Head of caudate nucleus (tissue), 42 donors: ENCODE measurements at regions of chr19 and their contacts with region 1.

Region 1: GRCh38 chr19:46668662-46669061 is 7.7 kb upstream of the DACT3 start:
- DNase-seq: no peak

Region 2: GRCh38 chr19:46181388-46181779 is 487.3 kb before region 1 on chr19:
- intact Hi-C with region 1: no loop called
- DNase-seq: no peak

Region 3: DNA sequence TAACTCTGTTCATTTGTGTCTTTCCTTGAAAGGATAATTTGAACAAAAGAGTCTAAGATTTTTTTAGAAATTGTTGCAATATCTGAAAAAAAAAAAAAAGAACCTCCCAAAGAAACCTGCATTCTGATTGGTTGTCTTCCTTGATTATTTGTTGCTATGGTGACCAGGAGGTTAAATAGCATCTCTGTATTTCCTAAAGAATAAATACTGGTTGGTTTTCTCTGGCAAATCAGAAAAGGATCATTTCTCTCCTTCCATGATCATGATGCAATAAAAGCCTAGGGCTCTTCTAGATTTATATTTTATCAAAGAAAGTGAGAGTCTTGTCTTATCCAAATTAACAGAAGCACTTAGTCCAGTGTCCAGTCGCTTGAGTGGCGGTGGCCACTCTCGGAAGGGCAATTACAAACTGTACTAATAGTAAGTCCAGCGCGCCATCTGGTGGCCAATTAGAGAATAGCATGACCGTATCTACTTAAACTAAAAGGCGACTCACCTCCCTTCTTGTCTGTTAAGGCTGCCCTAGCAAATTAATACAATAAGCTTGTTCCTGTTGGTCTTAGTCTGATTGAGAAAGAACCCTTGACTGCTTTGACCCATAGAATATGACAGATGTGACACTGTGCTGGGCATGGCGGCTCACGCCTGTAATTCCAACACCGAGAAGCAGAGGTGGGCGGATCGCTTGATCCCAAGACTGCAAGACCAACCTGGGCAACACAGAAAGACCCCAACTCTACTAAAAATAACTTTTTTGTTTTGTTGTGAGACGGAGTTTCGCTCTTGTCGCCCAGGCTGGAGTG is 126.0 kb before region 1 on chr19:
- intact Hi-C with region 1: no loop called
- DNase-seq: peak; percentile 75 to 99 (median 92)

Region 4: DNA sequence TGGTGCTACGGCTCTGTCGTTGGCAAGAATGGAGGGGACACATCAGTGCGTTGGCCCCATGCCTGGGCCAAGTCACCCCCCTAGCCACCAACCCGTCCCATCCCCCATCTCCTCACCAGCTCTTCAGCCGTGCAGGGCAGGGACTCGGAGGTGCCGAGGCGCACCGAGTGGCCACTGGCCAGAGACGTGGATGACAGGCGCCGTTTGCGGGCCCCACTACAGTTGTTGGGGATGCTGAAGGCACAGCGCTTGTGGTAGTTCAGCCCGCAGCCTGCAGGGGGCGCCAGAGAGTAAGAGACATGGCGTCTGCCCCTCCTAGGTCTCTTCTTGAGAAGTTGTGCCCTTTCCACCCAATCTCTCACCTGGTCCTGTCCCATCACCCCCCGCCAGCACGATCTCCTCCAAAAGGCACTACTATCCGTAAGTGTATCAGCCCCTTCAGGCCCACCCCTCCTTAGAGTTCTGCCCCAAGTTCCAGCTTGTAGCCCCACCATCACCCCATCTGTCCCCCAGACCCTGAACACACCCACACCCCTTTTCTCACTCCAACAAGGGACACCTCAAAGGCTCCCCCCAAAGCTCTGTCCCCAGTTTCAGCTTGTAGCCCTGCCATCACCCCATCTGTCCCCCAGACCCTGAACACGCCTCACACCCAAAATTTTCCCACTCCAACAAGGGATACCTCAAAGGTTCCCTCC is 35.9 kb after region 1 on chr19:
- intact Hi-C with region 1: loop called (anchors 5 kb)
- DNase-seq: peak in 38 of 42 donors; percentile 46 to 89 (median 72)